Activated naive CD4-positive, alpha-beta T cell treated with anti-CD3 and anti-CD28 coated beads, Interleukin-2, amount 10 ng/mL, durations not matched to agents 7 days and 5 days (primary cell): ENCODE measurements at regions of chr1 and their contacts with region 1.

Region 1: DNA sequence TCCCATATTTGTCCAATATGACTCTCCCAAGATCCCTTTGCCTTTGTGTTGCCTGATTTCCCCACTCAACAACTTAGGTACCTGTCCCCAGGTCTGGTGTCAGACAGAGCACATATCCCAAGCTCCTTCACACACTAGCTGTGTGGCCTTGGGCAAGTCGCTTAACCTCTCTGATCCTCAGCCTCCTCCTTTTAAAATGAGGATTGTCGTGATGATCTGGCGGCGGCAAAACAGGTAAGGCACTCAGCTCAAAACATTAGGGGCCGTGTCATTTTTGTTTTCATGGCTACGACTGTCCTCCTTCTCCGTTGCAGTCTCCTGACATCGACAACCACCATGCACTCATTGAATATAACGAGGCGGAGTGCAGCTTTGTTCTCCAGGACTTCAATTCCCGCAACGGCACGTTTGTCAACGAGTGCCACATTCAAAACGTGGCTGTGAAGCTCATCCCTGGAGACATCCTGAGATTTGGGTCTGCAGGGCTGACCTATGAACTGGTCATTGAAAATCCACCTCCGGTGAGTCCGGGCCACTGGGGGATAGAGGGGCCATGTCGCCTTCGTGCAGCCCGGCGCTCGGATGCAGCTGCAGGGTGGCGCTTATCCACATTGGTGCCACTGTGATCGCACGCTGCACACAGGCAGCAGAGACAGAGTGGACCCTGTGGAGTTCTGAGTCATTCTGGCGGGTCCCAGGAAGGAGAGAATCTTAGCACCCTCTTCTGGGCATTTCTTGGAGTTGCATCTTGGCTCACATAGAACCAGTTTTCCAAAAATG is 25.2 kb downstream of the FHAD1 start:
- DNase-seq: peak; percentile 58
- H3K4me3 Mint-ChIP-seq: no peak overlapping the region
- H3K27ac Mint-ChIP-seq: no peak overlapping the region
- H3K4me1 Mint-ChIP-seq: peaks cover 2% of the 10 kb centered on the region
- H3K27me3 Mint-ChIP-seq: peaks cover 47% of the 10 kb centered on the region

Region 2: GRCh38 chr1:15152318-15153183 is 119.6 kb before region 1 on chr1:
- CTCF ChIA-PET with region 1: interaction called, 22 read pairs
- DNase-seq: peak; percentile 46
- H3K4me3 Mint-ChIP-seq: peak overlapping the region; percentile 41
- H3K27ac Mint-ChIP-seq: no peak overlapping the region
- H3K4me1 Mint-ChIP-seq: peaks cover 36% of the 10 kb centered on the region
- H3K27me3 Mint-ChIP-seq: peaks cover 87% of the 10 kb centered on the region

Region 3: GRCh38 chr1:15196807-15197530 is 75.2 kb before region 1 on chr1:
- CTCF ChIA-PET with region 1: no interaction called
- DNase-seq: no peak
- H3K4me3 Mint-ChIP-seq: no peak overlapping the region
- H3K27ac Mint-ChIP-seq: no peak overlapping the region
- H3K4me1 Mint-ChIP-seq: no peaks in the 10 kb centered on the region
- H3K27me3 Mint-ChIP-seq: peaks cover 25% of the 10 kb centered on the region